Cardiac septum (tissue), 1 donor: ENCODE measurements at regions of chr12 and their contacts with region 1.

Region 1: DNA sequence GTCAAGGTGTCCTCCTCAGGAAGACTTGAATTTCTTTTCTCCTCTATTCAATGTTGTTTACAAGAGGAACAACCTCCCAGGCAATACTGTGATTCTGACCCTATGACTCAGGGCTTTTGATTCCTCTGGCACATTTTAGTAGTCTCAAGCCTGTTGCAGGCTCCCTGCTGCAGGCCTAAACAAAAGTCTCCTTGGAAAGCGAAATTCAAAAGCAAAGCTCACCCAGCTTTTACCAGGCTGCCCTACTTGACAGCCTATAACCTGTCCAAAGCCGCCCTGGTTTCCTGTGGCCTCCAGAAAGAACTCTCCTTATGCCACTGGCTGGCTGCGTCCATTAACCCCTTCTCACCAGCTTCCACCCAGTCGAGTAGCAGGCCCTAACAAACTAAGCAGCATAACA is 11.6 kb downstream of the FGD6 start:
- DNase-seq: no peak

Region 2: DNA sequence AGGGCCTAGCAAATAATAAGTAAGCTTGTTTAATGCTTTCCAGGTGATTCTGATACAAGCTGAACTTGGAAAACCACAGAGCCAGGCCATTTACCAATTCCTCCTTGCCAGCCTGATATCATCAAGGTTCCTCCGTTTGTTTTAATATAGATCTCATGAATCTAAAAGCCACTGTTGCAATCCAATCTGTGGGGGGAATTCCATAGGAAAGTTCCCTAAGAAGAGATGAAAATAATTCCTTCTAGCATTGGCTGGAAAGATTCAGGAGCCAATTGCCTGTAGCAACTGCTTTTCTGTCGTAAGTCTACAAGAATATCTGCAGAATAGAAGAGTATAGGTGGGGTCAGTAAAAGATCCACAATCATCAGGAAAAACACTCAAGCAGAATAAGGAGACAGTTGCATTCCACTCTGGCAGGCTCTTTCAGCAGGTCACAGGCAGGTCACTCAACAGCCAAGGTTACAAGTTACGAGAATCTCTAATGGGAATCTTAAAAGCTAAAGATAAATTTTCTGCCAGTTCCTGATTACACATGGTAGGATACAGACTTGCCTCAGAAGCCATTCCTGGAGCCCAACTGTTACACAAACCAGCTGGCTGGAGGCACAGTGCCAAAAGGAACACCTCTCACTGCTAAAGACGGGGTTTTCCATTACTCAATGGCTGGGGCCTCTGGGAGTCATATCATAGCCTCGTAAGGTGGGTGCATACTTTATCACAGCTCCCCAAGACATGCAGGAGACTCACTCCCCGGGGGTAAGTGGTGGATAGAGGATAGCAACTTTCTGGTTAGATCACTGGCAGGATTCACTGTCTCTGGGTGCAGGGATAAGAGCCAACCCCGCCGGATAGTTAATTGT is 32.1 kb before region 1 on chr12:
- intact Hi-C with region 1: loop called (anchors 5 kb)
- DNase-seq: peak; percentile 78